ENCODE measurements at regions of chr7 and their contacts with region 1.

Region 1: GRCh38 chr7:144118339-144118738 is 4.6 kb upstream of the OR2A14 start:
- DNase-seq: no peak
- H3K4me3 Mint-ChIP-seq: no peak overlapping the region
- H3K27ac Mint-ChIP-seq: no peak overlapping the region
- H3K4me1 Mint-ChIP-seq: no peaks in the 10 kb centered on the region
- H3K27me3 Mint-ChIP-seq: no peaks in the 10 kb centered on the region
- CTCF ChIP-seq: no peak

Region 2: GRCh38 chr7:143447466-143447865 is 670.9 kb before region 1 on chr7:
- CTCF ChIA-PET with region 1: no interaction called
- intact Hi-C with region 1: loop called (anchors 10 kb)
- DNase-seq: no peak
- H3K4me3 Mint-ChIP-seq: no peak overlapping the region
- H3K27ac Mint-ChIP-seq: no peak overlapping the region
- H3K4me1 Mint-ChIP-seq: no peaks in the 10 kb centered on the region
- H3K27me3 Mint-ChIP-seq: no peaks in the 10 kb centered on the region
- CTCF ChIP-seq: no peak

Measured in Calu3 (cell line).